Activated CD8-positive, alpha-beta memory T cell treated with anti-CD3 and anti-CD28 coated beads, Interleukin-2, amount 10 ng/mL, durations not matched to agents 7 days and 5 days (primary cell): ENCODE measurements at regions of chr7 and their contacts with region 1.

Region 1: DNA sequence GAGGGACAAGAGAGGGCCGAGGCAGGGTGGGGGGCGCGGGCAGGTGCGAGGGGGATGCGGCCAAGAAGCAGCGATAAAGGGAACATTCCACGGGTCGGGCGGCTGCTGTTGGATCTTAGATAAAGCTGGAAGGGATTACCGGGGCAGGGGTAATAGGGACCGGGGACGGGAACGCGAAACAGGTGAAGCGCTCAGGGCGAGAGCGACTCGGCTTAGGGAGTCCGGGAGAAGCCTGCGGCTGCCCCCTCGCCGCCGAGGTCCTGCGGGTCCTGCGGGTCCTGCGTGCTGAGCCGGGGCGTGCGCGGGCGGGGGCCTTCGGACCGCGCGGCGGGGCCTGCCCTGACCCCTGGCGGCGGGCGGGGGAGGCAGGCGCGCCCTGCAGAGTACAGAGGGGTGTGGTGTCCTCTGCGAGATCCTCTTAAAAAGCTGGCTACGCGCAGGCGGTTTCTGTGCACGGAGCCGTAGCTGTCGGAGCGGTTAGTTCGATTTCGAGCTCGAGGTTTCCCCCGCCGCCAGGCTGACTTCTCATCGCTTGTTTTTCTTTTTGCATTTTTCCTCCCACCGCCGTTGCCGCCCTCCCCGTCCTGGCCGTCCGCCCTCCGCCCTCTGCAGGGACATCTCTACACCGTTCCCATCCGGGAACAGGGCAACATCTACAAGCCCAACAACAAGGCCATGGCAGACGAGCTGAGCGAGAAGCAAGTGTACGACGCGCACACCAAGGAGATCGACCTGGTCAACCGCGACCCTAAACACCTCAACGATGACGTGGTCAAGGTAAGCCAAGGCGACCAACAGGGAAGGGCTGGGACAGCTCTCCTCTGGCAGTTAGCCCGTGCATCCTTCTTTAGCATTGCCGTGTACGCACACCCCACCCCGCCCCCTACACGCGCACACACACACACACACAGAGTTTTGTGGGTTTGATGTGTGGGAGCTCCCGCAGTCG is 1.4 kb downstream of the CAV1 start:
- DNase-seq: peak; percentile 77
- ATAC-seq: peak; percentile 96
- H3K4me3 Mint-ChIP-seq: peak overlapping the region; percentile 82
- H3K27ac Mint-ChIP-seq: no peak overlapping the region
- H3K4me1 Mint-ChIP-seq: peaks cover 21% of the 10 kb centered on the region
- H3K27me3 Mint-ChIP-seq: peaks cover 80% of the 10 kb centered on the region

Region 2: GRCh38 chr7:116138202-116138801 is 387.9 kb before region 1 on chr7:
- CTCF ChIA-PET with region 1: interaction called, 17 read pairs
- DNase-seq: peak; percentile 46
- ATAC-seq: peak; percentile 92
- H3K4me3 Mint-ChIP-seq: no peak overlapping the region
- H3K27ac Mint-ChIP-seq: no peak overlapping the region
- H3K4me1 Mint-ChIP-seq: peaks cover 31% of the 10 kb centered on the region
- H3K27me3 Mint-ChIP-seq: peaks cover 13% of the 10 kb centered on the region

Region 3: GRCh38 chr7:116258734-116259133 is 267.5 kb before region 1 on chr7:
- CTCF ChIA-PET with region 1: interaction called, 27 read pairs
- DNase-seq: no peak
- ATAC-seq: no peak
- H3K4me3 Mint-ChIP-seq: no peak overlapping the region
- H3K27ac Mint-ChIP-seq: no peak overlapping the region
- H3K4me1 Mint-ChIP-seq: peaks cover 10% of the 10 kb centered on the region
- H3K27me3 Mint-ChIP-seq: no peaks in the 10 kb centered on the region

Region 4: GRCh38 chr7:116367221-116367813 is 158.9 kb before region 1 on chr7:
- CTCF ChIA-PET with region 1: no interaction called
- DNase-seq: no peak
- ATAC-seq: no peak
- H3K4me3 Mint-ChIP-seq: no peak overlapping the region
- H3K27ac Mint-ChIP-seq: no peak overlapping the region
- H3K4me1 Mint-ChIP-seq: no peaks in the 10 kb centered on the region
- H3K27me3 Mint-ChIP-seq: peaks cover 18% of the 10 kb centered on the region

Region 5: DNA sequence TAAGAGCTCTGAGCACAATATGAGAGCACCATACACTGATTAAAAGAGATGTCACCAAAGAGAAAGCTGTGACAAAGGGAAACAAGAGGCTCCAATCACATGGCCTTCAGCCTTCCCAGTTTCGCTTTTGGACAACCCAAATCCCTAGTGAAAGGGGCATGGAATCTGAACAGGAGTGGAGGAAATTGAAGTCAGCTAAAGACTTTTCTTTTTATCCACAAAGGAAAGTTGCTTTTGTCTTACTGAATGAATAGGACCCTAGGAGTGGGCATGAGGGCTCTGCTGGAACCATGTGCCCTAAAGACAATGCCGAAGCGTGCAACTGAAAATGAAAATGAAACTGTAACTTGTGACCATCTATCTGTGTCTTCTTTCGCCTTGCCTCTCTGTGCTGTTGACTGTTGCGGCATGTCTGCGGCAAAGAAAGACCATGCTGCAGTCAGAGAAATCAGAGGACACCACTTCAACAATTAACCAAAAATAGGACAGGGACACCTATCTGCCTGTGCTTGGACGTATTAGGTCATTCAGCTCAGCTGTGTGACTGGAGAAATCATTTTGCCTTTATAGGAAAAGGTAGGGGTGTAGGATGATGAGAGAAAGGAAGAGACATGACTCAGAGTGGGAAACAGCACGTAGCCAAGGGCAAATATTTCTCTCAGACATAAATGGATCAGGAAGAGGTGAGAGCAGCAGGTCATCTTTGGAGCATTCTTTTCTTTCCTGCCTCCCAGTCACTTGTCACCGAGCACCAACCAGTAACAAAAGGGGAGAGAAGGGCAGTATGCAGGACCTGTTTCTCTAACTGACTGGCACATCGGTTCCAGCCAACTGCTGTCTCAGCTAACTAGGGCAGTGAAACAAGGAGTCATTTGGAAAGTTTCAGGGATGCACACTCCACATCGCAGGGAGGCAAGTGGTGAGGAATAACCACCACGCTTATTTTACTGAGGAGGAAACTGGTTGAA is 14.4 kb before region 1 on chr7:
- CTCF ChIA-PET with region 1: interaction called, 25 read pairs
- DNase-seq: peak; percentile 72
- ATAC-seq: peak; percentile 98
- H3K4me3 Mint-ChIP-seq: peak overlapping the region; percentile 85
- H3K27ac Mint-ChIP-seq: peak overlapping the region; percentile 84
- H3K4me1 Mint-ChIP-seq: peaks cover 19% of the 10 kb centered on the region
- H3K27me3 Mint-ChIP-seq: peaks cover 28% of the 10 kb centered on the region

Region 6: GRCh38 chr7:116692401-116693308 is 166.5 kb after region 1 on chr7:
- CTCF ChIA-PET with region 1: no interaction called
- DNase-seq: no peak
- ATAC-seq: no peak
- H3K4me3 Mint-ChIP-seq: no peak overlapping the region
- H3K27ac Mint-ChIP-seq: no peak overlapping the region
- H3K4me1 Mint-ChIP-seq: no peaks in the 10 kb centered on the region
- H3K27me3 Mint-ChIP-seq: peaks cover 23% of the 10 kb centered on the region